Ascending aorta (tissue), 2 donors: ENCODE measurements at regions of chr9 and their contacts with region 1.

Region 1: DNA sequence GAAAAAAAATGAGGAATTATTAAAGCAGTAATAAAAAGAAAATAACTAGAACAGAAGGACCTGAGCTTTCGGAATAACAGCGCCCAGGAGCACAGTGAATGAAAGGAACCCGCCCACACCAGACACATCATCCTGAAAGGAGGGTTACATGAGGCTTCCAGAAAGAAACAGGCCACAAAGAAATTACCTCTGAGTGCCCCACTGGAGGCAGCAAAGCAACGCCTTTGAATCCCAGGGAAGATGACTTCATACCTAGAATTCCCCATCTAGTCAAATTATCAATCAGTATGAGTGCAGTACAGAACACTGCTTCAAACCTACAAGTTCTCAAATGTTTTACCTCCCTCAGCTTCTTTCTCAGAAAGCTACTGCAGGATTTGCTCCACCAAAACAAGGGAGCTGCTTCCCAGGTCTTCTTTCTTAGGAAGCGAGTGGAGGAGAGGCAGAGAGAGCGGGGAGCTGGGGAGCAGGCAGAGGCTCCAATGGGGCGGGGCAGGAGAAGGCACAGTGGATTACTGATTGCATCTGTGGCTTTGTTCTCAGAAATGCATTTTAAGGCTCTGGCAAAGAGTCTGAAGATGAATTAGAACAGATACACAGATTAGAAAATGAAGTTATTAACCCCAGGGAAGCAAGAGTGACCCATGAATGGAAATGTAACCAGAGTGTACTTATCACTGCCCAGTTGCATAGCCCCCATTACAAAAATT is 87.1 kb downstream of the SEMA4D start:
- DNase-seq: no peak
- H3K4me3 ChIP-seq: no peak overlapping the region
- H3K27ac ChIP-seq: no peak overlapping the region
- H3K4me1 ChIP-seq: no peaks in the 10 kb centered on the region
- H3K27me3 ChIP-seq: no peaks in the 10 kb centered on the region
- CTCF ChIP-seq: no peak

Region 2: GRCh38 chr9:89549031-89549644 is 138.3 kb after region 1 on chr9:
- intact Hi-C with region 1: loop called (anchors 10 kb)
- DNase-seq: peak in 1 of 2 donors; percentile 79
- H3K4me3 ChIP-seq: no peak overlapping the region
- H3K27ac ChIP-seq: no peak overlapping the region
- H3K4me1 ChIP-seq: no peaks in the 10 kb centered on the region
- H3K27me3 ChIP-seq: no peaks in the 10 kb centered on the region
- CTCF ChIP-seq: peak; percentile 49 to 72 (median 64)